ENCODE measurements at regions of chr11 and their contacts with region 1.

Region 1: GRCh38 chr11:20887137-20887536 is 217.8 kb downstream of the NELL1 start:
- DNase-seq: no peak
- ATAC-seq: no peak
- H3K4me3 ChIP-seq: no peak overlapping the region
- H3K27ac ChIP-seq: no peak overlapping the region
- H3K4me1 ChIP-seq: no peaks in the 10 kb centered on the region
- H3K27me3 ChIP-seq: no peaks in the 10 kb centered on the region
- CTCF ChIP-seq: no peak
- POLR2A ChIP-seq: no peak

Region 2: GRCh38 chr11:20790622-20791021 is 96.5 kb before region 1 on chr11:
- in situ Hi-C with region 1: no loop called
- intact Hi-C with region 1: no loop called
- DNase-seq: no peak
- ATAC-seq: no peak
- H3K4me3 ChIP-seq: no peak overlapping the region
- H3K27ac ChIP-seq: no peak overlapping the region
- H3K4me1 ChIP-seq: no peaks in the 10 kb centered on the region
- H3K27me3 ChIP-seq: no peaks in the 10 kb centered on the region
- CTCF ChIP-seq: no peak
- POLR2A ChIP-seq: no peak

Region 3: DNA sequence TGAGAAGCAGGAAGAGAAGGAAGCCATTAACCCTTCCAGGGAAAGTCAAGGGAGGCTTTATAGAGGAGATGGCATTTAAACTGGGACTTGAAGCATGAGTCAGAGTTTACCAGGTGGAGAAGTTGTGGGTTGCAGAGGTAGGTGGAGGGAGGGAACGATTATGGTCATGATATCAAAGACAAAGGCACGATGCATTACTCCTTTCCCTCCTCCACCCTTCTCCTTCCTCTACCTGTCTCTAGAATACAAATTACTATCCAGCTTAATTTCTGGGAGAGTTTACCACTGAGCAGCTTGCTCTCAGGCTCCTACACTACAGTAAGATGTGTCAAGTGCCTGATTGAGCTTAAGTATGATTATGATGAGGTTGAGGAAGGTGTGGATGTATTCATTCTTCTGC is 66.1 kb before region 1 on chr11:
- in situ Hi-C with region 1: no loop called
- intact Hi-C with region 1: loop called (anchors 2 kb)
- DNase-seq: no peak
- ATAC-seq: no peak
- H3K4me3 ChIP-seq: no peak overlapping the region
- H3K27ac ChIP-seq: no peak overlapping the region
- H3K4me1 ChIP-seq: no peaks in the 10 kb centered on the region
- H3K27me3 ChIP-seq: no peaks in the 10 kb centered on the region
- CTCF ChIP-seq: no peak
- POLR2A ChIP-seq: no peak